Endothelial cell of umbilical vein (primary cell): ENCODE measurements at regions of chr7 and their contacts with region 1.

Region 1: DNA sequence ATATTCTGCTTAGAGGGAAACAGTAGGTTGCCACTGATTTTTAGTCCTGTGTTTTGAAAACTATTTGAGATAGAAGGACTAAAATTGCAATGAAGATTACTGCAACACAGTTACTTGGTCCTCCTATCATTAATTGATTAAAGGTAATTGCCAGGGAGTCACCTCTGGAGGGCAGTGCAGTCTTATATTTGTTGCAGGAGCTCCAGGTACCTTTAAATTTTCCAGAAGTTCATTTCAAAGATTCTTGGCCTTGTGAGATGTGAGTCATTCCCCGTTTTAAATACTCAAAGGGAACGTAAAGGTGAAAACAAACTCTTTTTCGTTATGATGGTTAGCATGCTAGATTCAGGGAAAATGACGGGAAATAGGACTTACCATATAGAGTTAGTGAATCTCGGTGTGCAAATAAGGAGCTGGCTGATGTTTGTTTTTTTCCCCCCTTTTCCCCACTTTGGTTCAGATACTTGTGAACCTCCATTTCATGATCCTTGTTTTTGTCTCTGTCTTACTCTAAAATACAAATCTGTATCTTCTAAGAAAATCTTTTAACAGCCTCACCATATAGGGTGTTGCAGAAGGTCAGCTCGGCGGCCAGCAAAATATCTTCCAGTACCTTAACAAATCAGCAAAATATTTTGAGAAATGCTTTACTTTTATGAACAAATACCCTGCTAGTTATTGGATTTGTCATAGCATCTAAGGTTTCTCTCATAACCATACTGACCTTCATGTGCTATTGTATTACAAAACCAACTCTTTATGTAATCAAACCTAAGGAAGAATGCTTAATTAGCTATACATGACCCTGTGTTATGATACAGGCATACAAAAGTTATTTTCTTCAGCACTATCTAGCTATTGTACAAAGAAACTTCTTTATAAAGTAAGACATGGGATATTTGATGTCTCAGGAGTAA is 143.0 kb upstream of the HDAC9 start:
- DNase-seq: peak; percentile 78
- H3K4me3 ChIP-seq: no peak overlapping the region
- H3K27ac ChIP-seq: no peak overlapping the region
- H3K4me1 ChIP-seq: peaks cover 2% of the 10 kb centered on the region
- H3K27me3 ChIP-seq: no peaks in the 10 kb centered on the region
- CTCF ChIP-seq: peak; percentile 40 to 55
- POLR2A ChIP-seq: no peak

Region 2: GRCh38 chr7:17830206-17830605 is 522.4 kb before region 1 on chr7:
- CTCF ChIA-PET with region 1: no interaction called
- POLR2A ChIA-PET with region 1: no interaction called
- dilution Hi-C with region 1: no loop called
- intact Hi-C with region 1: no loop called
- DNase-seq: no peak
- H3K4me3 ChIP-seq: no peak overlapping the region
- H3K27ac ChIP-seq: no peak overlapping the region
- H3K4me1 ChIP-seq: no peaks in the 10 kb centered on the region
- H3K27me3 ChIP-seq: no peaks in the 10 kb centered on the region
- CTCF ChIP-seq: no peak
- POLR2A ChIP-seq: no peak

Region 3: DNA sequence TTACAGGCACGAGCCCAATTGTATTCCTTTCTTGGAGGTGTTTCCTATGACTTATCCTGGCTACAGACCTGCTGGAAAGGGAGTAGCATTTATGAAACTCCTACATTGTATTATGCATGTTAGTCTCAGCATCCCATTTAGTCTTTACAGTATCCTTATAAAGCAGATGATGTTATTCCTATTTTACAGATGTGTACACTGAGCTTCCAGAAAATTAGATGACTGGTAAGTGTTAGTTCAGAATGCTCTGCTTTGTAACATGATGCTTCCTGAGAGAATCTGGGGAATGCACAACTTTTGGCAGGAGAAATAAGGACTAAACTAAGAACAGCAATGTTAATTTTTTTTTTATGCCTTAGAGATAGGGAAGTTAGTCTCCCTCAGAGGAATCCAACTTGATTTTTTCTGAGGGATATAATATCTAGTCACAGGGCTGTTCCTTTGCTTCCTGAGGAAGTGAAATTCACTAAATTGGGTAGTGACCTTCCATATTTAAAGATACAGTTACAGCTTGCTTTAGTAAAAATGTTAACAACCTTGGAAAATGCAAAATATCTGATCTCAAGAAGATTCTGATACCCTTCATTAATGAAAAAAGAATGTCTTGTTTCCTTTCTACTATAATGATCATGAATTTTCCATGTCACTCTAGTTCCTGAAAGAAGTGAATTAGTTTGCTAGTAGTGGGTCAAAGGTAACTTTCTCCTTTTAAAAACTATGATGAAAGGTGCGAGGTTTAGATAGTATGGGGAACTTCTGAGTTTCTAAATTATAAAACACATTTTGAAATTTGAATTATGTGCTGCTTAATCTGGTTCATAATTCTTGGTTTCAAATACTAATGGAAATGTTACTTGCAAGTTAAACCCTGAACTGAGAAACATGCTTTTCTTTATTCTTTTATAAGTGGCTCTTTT is 131.0 kb before region 1 on chr7:
- CTCF ChIA-PET with region 1: no interaction called
- POLR2A ChIA-PET with region 1: no interaction called
- dilution Hi-C with region 1: no loop called
- intact Hi-C with region 1: no loop called
- DNase-seq: no peak
- H3K4me3 ChIP-seq: no peak overlapping the region
- H3K27ac ChIP-seq: no peak overlapping the region
- H3K4me1 ChIP-seq: no peaks in the 10 kb centered on the region
- H3K27me3 ChIP-seq: no peaks in the 10 kb centered on the region
- CTCF ChIP-seq: no peak
- POLR2A ChIP-seq: no peak

Region 4: GRCh38 chr7:18399436-18400235 is 47.0 kb after region 1 on chr7:
- CTCF ChIA-PET with region 1: interaction called, 13 read pairs
- POLR2A ChIA-PET with region 1: no interaction called
- dilution Hi-C with region 1: no loop called
- intact Hi-C with region 1: no loop called
- DNase-seq: no peak
- H3K4me3 ChIP-seq: no peak overlapping the region
- H3K27ac ChIP-seq: no peak overlapping the region
- H3K4me1 ChIP-seq: no peaks in the 10 kb centered on the region
- H3K27me3 ChIP-seq: no peaks in the 10 kb centered on the region
- CTCF ChIP-seq: no peak
- POLR2A ChIP-seq: no peak

Region 5: DNA sequence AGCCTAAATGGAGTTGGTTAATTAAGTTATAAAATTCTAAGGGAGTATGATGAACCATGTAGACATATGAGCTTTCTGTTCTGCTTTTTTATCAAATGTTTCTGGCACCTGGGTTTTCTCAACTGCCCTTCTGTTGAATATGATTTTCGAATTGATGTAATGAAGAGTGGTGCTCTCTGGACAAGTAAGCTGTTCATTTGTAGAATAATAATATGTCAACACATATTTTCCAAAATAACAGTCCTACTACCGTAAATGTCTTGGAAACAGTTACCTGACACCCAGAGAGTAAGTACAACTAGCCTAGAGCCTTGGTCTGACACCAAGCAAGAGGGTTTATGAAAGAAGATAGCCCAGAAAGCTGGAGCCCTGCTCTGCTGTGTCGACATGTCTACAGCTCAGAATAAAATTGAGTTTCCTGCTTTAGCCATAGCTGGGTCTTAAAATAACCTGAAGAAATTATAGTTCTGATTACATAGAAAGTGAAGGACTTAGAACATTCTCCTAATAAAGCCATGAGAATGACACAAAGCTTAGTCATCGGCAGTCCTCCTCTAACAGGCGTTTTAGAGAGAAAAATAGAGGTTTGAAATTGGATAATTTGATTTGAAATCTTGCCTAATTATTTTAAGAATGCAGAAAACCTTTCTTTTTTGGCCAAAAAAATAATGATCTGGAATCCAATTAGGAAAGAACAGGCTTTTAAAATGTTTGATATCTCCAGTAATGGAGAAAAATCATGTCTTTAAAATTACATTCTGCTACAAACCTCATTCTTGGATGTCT is 168.0 kb after region 1 on chr7:
- CTCF ChIA-PET with region 1: interaction called, 12 read pairs
- POLR2A ChIA-PET with region 1: no interaction called
- dilution Hi-C with region 1: no loop called
- intact Hi-C with region 1: no loop called
- DNase-seq: no peak
- H3K4me3 ChIP-seq: no peak overlapping the region
- H3K27ac ChIP-seq: peak overlapping the region; percentile 24
- H3K4me1 ChIP-seq: peaks cover 6% of the 10 kb centered on the region
- H3K27me3 ChIP-seq: no peaks in the 10 kb centered on the region
- CTCF ChIP-seq: no peak
- POLR2A ChIP-seq: no peak

Region 6: DNA sequence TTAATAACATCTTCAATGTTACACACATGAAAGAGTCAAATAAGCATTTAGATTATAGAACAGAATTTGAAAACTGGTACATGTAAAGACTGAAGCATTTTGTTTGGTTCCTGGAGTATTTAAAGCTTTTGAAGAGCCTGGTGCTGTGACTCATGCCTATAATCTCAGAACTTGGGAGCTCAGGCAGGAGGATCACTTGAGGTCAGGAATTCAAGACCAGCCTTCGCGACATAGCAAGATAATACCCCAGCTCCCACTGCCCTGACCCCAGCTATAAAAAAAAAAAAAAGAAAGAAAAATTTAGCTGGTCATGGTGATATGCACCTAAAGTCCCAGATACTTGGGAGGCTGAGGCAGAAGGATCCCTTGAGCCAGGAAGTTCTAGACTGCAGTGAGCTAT is 230.7 kb after region 1 on chr7:
- CTCF ChIA-PET with region 1: interaction called, 18 read pairs
- POLR2A ChIA-PET with region 1: no interaction called
- dilution Hi-C with region 1: no loop called
- intact Hi-C with region 1: no loop called
- DNase-seq: no peak
- H3K4me3 ChIP-seq: no peak overlapping the region
- H3K27ac ChIP-seq: no peak overlapping the region
- H3K4me1 ChIP-seq: no peaks in the 10 kb centered on the region
- H3K27me3 ChIP-seq: no peaks in the 10 kb centered on the region
- CTCF ChIP-seq: no peak
- POLR2A ChIP-seq: no peak

Region 7: DNA sequence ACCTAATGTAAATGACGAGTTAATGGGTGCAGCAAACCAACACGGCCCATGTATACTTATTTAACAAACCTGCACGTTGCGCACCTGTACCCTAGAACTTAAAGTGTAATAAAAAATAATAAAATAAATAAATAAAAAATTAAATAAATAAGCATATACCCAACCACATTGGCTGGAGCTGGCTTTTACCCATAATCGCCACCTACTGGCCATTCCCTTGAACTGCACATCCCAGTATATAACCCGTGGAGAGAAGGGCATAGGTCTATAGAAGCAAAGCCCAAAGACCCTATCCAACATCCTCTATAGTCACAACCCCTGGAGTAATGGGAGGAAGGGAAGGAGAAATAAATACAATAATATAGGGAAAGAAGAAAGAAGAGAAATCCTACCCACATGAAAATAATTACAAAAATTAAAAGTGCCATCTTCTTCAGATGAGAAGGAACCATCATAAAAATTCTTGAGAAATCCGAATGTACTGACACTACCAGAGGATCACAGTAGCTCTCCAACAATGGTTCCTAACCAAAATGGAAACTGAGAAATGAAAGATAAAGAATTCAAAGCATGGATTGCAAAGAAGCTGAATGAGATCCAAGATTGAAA is 699.3 kb after region 1 on chr7:
- CTCF ChIA-PET with region 1: interaction called, 19 read pairs
- POLR2A ChIA-PET with region 1: no interaction called
- dilution Hi-C with region 1: no loop called
- intact Hi-C with region 1: no loop called
- DNase-seq: peak; percentile 42
- H3K4me3 ChIP-seq: no peak overlapping the region
- H3K27ac ChIP-seq: no peak overlapping the region
- H3K4me1 ChIP-seq: no peaks in the 10 kb centered on the region
- H3K27me3 ChIP-seq: no peaks in the 10 kb centered on the region
- CTCF ChIP-seq: peak; percentile 63 to 66
- POLR2A ChIP-seq: no peak

Region 8: GRCh38 chr7:19248681-19249080 is 896.1 kb after region 1 on chr7:
- CTCF ChIA-PET with region 1: no interaction called
- POLR2A ChIA-PET with region 1: no interaction called
- dilution Hi-C with region 1: no loop called
- intact Hi-C with region 1: no loop called
- DNase-seq: no peak
- H3K4me3 ChIP-seq: no peak overlapping the region
- H3K27ac ChIP-seq: no peak overlapping the region
- H3K4me1 ChIP-seq: no peaks in the 10 kb centered on the region
- H3K27me3 ChIP-seq: no peaks in the 10 kb centered on the region
- CTCF ChIP-seq: no peak
- POLR2A ChIP-seq: no peak

Region 9: GRCh38 chr7:19665399-19666008 is 1312.9 kb after region 1 on chr7:
- CTCF ChIA-PET with region 1: interaction called, 40 read pairs
- POLR2A ChIA-PET with region 1: no interaction called
- dilution Hi-C with region 1: no loop called
- intact Hi-C with region 1: no loop called
- DNase-seq: peak; percentile 31
- H3K4me3 ChIP-seq: no peak overlapping the region
- H3K27ac ChIP-seq: no peak overlapping the region
- H3K4me1 ChIP-seq: no peaks in the 10 kb centered on the region
- H3K27me3 ChIP-seq: peaks cover 2 to 11% of the 10 kb centered on the region in 2 experiments
- CTCF ChIP-seq: peak in 1 of 2 donors; percentile 32
- POLR2A ChIP-seq: no peak